CD4-positive, alpha-beta T cell (primary cell): ENCODE measurements at regions of chr3 and their contacts with region 1.

Region 1: GRCh38 chr3:49856181-49857005 is at the start of gene TRAIP:
- DNase-seq: peak; percentile 88 to 98 (median 92)
- ATAC-seq: peak; percentile 98
- H3K4me3 ChIP-seq: peak within 1 kb of the TSS; percentile 59
- H3K4me3 Mint-ChIP-seq: peak within 1 kb of the TSS; percentile 83
- H3K27ac ChIP-seq: peak within 1 kb of the TSS; percentile 42 to 63
- H3K27ac Mint-ChIP-seq: peak within 1 kb of the TSS; percentile 85
- H3K4me1 ChIP-seq: peaks cover 18% of the 10 kb centered on the region
- H3K4me1 Mint-ChIP-seq: peaks cover 7% of the 10 kb centered on the region
- H3K27me3 ChIP-seq: no peaks in the 10 kb centered on the region
- H3K27me3 Mint-ChIP-seq: no peaks in the 10 kb centered on the region
- CTCF ChIP-seq: no peak
- total RNA-seq, gene TRAIP: 2.4 TPM

Region 2: DNA sequence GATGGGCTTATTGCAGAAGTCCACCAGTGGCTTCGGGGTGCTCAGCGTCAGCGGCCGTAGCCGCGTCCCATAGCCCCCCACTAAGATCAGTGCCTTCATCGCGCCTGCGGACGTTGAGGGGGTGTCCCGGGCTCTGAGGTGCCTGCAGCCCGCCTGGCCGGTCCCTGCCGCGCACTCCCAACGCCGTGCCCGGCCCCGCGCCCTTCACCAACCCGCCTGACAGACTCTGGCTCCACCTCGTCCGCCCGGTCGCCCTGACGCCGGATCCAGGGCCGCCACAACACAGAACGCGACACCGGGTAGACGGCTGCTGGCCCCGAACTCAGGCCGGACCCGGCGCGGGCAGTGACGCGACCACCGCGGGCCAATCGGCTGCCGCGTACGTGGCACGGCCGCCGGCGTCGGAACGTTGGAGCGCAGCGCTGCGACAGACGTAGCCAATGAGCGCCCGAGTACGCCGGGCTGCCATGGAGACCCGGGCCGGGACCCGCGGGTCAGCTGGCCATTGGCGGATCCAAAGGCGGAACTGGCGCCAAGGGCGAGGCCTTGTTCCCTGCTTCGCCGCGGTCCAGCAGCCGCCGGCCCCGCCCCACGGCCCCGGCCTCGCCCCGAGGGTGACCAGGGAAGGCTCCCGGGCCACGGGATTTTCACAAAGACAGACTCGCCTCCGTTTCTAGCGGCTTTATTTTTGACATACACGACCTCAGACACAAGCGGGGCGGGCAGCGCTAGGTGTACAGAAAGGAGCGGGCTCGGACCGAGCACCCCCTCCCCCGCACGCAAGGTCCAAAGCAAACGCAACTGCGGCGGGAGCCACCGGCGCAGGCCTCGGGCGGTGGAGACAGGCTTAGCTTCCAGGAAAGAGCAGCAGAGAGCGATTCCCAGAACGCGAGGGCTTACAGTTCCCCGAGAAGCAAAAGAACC is 132.5 kb before region 1 on chr3 and contains the start of gene GMPPB:
- CTCF ChIA-PET with region 1: no interaction called
- POLR2A ChIA-PET with region 1: no interaction called
- intact Hi-C with region 1: no loop called
- DNase-seq: peak; percentile 81 to 96 (median 88)
- ATAC-seq: peak; percentile 70
- H3K4me3 ChIP-seq: peak within 1 kb of the TSS; percentile 99
- H3K4me3 Mint-ChIP-seq: peak within 1 kb of the TSS; percentile 98
- H3K27ac ChIP-seq: peak within 1 kb of the TSS; percentile 96 to 97
- H3K27ac Mint-ChIP-seq: peak within 1 kb of the TSS; percentile 93
- H3K4me1 ChIP-seq: peaks cover 37% of the 10 kb centered on the region
- H3K4me1 Mint-ChIP-seq: peaks cover 44% of the 10 kb centered on the region
- H3K27me3 ChIP-seq: no peaks in the 10 kb centered on the region
- H3K27me3 Mint-ChIP-seq: no peaks in the 10 kb centered on the region
- CTCF ChIP-seq: no peak
- total RNA-seq, gene GMPPB: 39.0 to 41.4 TPM

Region 3: GRCh38 chr3:49882166-49882565 is 25.8 kb after region 1 on chr3:
- CTCF ChIA-PET with region 1: no interaction called
- POLR2A ChIA-PET with region 1: no interaction called
- intact Hi-C with region 1: no loop called
- DNase-seq: no peak
- ATAC-seq: no peak
- H3K4me3 ChIP-seq: no peak overlapping the region
- H3K4me3 Mint-ChIP-seq: no peak overlapping the region
- H3K27ac ChIP-seq: no peak overlapping the region
- H3K27ac Mint-ChIP-seq: no peak overlapping the region
- H3K4me1 ChIP-seq: no peaks in the 10 kb centered on the region
- H3K4me1 Mint-ChIP-seq: no peaks in the 10 kb centered on the region
- H3K27me3 ChIP-seq: no peaks in the 10 kb centered on the region
- H3K27me3 Mint-ChIP-seq: no peaks in the 10 kb centered on the region
- CTCF ChIP-seq: no peak

Region 4: DNA sequence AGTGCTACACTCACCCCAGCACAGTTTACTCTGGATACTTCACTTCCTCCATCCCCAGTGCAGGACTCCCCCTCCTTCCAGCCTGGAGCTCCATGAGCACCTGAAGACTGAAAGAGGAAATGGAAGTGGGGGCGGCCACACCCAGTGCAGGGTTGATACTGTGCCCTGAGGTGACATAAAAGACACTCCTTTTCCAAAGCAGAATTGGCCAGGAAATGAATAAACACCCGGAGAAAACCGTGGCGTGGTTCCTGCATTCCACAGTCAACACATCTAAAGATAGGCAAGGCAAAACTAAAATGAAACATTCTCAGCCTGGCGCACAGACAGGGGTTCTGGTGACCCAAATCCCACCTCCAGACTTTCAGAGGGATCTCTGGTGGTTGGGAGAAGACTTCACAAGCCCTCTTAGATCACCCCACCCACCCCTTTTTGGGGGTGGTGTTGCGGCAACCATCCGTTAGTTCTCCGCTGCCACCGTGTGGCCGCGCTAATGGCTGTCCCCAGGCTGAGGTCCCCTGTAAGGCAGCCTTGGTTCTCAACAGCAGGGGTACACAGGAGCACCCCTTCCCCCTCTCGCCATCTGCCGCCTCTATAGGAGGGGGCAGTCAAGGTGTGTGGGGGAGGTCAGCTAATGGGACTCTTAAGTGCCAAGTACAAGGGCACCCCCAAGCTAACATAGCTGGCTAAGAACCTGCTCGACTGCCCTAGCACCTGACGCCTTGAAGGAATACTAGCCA is 49.8 kb after region 1 on chr3:
- CTCF ChIA-PET with region 1: no interaction called
- POLR2A ChIA-PET with region 1: no interaction called
- intact Hi-C with region 1: loop called in 1 of 2 experiments (anchors 2 kb)
- DNase-seq: peak; percentile 15 to 77 (median 40)
- ATAC-seq: peak; percentile 43
- H3K4me3 ChIP-seq: no peak overlapping the region
- H3K4me3 Mint-ChIP-seq: peak overlapping the region; percentile 75
- H3K27ac ChIP-seq: peak overlapping the region in 1 of 2 donors; percentile 32
- H3K27ac Mint-ChIP-seq: peak overlapping the region; percentile 85
- H3K4me1 ChIP-seq: peaks cover 39% of the 10 kb centered on the region
- H3K4me1 Mint-ChIP-seq: peaks cover 33% of the 10 kb centered on the region
- H3K27me3 ChIP-seq: no peaks in the 10 kb centered on the region
- H3K27me3 Mint-ChIP-seq: no peaks in the 10 kb centered on the region
- CTCF ChIP-seq: peak; percentile 57

Region 5: GRCh38 chr3:49929331-49930240 is 73.2 kb after region 1 on chr3 and contains the start of gene MON1A:
- CTCF ChIA-PET with region 1: interaction called, 4 read pairs
- POLR2A ChIA-PET with region 1: no interaction called
- intact Hi-C with region 1: loop called in 1 of 2 experiments (anchors 2 kb)
- DNase-seq: peak; percentile 67 to 91 (median 83)
- ATAC-seq: peak; percentile 92
- H3K4me3 ChIP-seq: peak within 1 kb of the TSS; percentile 75
- H3K4me3 Mint-ChIP-seq: peak within 1 kb of the TSS; percentile 85
- H3K27ac ChIP-seq: peak within 1 kb of the TSS; percentile 74 to 78
- H3K27ac Mint-ChIP-seq: peak within 1 kb of the TSS; percentile 86
- H3K4me1 ChIP-seq: peaks cover 20% of the 10 kb centered on the region
- H3K4me1 Mint-ChIP-seq: peaks cover 38% of the 10 kb centered on the region
- H3K27me3 ChIP-seq: no peaks in the 10 kb centered on the region
- H3K27me3 Mint-ChIP-seq: no peaks in the 10 kb centered on the region
- CTCF ChIP-seq: no peak
- total RNA-seq, gene MON1A: 0.85 to 1.3 TPM